CD8-positive, alpha-beta memory T cell (primary cell): ENCODE measurements at regions of chr6 and their contacts with region 1.

Region 1: GRCh38 chr6:25882051-25882496 is 8.0 kb upstream of the SLC17A3 start:
- DNase-seq: peak in 3 of 5 donors; percentile 20 to 61 (median 46)
- H3K4me3 ChIP-seq: no peak overlapping the region
- H3K4me3 Mint-ChIP-seq: peak overlapping the region in 5 of 7 donors; percentile 85 to 93 (median 91)
- H3K27ac ChIP-seq: no peak overlapping the region
- H3K27ac Mint-ChIP-seq: peak overlapping the region in 5 of 8 donors; percentile 62 to 95 (median 90)
- H3K4me1 ChIP-seq: no peaks in the 10 kb centered on the region
- H3K4me1 Mint-ChIP-seq: peaks cover 0 to 10% (median 0%) of the 10 kb centered on the region in 3 donors
- H3K27me3 ChIP-seq: no peaks in the 10 kb centered on the region
- H3K27me3 Mint-ChIP-seq: peaks cover 3 to 6% of the 10 kb centered on the region in 2 donors

Region 2: GRCh38 chr6:25717866-25718740 is 164.0 kb before region 1 on chr6:
- CTCF ChIA-PET with region 1: interaction called, 12 read pairs
- POLR2A ChIA-PET with region 1: no interaction called
- DNase-seq: peak in 1 of 5 donors; percentile 5
- H3K4me3 ChIP-seq: no peak overlapping the region
- H3K4me3 Mint-ChIP-seq: no peak overlapping the region
- H3K27ac ChIP-seq: no peak overlapping the region
- H3K27ac Mint-ChIP-seq: no peak overlapping the region
- H3K4me1 ChIP-seq: no peaks in the 10 kb centered on the region
- H3K4me1 Mint-ChIP-seq: no peaks in the 10 kb centered on the region
- H3K27me3 ChIP-seq: peaks cover 3% of the 10 kb centered on the region
- H3K27me3 Mint-ChIP-seq: peaks cover 8 to 26% of the 10 kb centered on the region in 2 donors

Region 3: GRCh38 chr6:25788305-25788922 is 93.7 kb before region 1 on chr6:
- CTCF ChIA-PET with region 1: interaction called, 11 read pairs
- POLR2A ChIA-PET with region 1: no interaction called
- DNase-seq: peak; percentile 3 to 56 (median 12)
- H3K4me3 ChIP-seq: no peak overlapping the region
- H3K4me3 Mint-ChIP-seq: no peak overlapping the region
- H3K27ac ChIP-seq: no peak overlapping the region
- H3K27ac Mint-ChIP-seq: peak overlapping the region in 2 of 8 donors; percentile 5 to 40
- H3K4me1 ChIP-seq: no peaks in the 10 kb centered on the region
- H3K4me1 Mint-ChIP-seq: no peaks in the 10 kb centered on the region
- H3K27me3 ChIP-seq: no peaks in the 10 kb centered on the region
- H3K27me3 Mint-ChIP-seq: peaks cover 0 to 4% of the 10 kb centered on the region in 2 donors

Region 4: DNA sequence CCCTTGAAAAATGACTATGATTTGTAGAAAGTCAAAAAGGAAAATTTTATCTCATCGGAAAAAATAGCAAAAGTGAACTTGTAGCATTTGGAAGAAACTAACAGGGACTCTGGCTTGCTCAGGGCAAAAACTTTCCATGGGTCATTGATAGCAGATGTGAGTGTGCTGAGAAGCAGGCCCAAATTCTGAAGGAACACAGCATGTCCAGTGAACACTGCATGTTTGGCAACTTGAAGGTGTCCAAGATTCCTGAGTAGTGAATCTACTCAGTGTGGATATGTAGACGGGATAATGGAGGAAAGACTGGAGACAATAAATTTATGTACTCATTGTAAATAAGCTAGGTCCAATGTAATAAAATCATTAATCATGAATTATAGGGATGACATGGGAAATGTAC is 40.2 kb after region 1 on chr6:
- CTCF ChIA-PET with region 1: no interaction called
- POLR2A ChIA-PET with region 1: no interaction called
- DNase-seq: no peak
- H3K4me3 ChIP-seq: no peak overlapping the region
- H3K4me3 Mint-ChIP-seq: no peak overlapping the region
- H3K27ac ChIP-seq: no peak overlapping the region
- H3K27ac Mint-ChIP-seq: peak overlapping the region in 1 of 8 donors; percentile 71
- H3K4me1 ChIP-seq: no peaks in the 10 kb centered on the region
- H3K4me1 Mint-ChIP-seq: no peaks in the 10 kb centered on the region
- H3K27me3 ChIP-seq: no peaks in the 10 kb centered on the region
- H3K27me3 Mint-ChIP-seq: peaks cover 4 to 16% of the 10 kb centered on the region in 2 donors